Activated B cell treated with CpG ODN at 0.5 μM for 24 hours (primary cell): ENCODE measurements at regions of chr3 and their contacts with region 1.

Region 1: DNA sequence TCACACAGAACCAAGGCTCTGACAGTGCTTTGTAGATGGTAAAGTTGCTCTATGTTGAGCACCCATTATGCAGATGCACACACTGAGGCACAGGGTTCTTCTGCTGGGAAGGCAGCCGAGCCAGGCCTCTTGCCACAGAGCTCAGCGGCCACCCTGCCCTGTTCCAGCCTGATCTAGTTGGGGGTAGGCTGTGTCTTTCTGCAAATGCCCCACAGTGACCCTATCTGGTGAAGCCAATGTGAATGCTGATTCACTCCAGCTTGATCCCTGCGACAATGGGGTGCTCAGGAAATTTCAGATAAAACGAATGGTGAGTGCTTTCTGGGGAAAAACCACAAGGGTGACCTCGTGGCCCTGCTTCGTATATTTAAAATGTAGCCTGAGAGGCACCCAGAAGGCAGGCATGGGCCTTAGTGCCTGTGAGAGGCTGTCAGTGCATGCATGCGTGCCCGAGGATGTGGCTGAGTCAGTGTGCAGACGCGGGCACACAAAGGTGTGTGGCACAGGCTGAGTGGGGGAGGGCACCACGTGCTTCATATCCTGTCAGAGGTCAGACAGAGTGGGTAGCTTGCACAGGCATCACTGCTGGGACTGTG is 85.7 kb downstream of the ATP2B2 start:
- DNase-seq: no peak
- ATAC-seq: peak; percentile 94
- H3K4me3 Mint-ChIP-seq: no peak overlapping the region
- H3K27ac Mint-ChIP-seq: no peak overlapping the region
- H3K4me1 Mint-ChIP-seq: peaks cover 22% of the 10 kb centered on the region
- H3K27me3 Mint-ChIP-seq: peaks cover 11% of the 10 kb centered on the region
- CTCF ChIP-seq: no peak

Region 2: DNA sequence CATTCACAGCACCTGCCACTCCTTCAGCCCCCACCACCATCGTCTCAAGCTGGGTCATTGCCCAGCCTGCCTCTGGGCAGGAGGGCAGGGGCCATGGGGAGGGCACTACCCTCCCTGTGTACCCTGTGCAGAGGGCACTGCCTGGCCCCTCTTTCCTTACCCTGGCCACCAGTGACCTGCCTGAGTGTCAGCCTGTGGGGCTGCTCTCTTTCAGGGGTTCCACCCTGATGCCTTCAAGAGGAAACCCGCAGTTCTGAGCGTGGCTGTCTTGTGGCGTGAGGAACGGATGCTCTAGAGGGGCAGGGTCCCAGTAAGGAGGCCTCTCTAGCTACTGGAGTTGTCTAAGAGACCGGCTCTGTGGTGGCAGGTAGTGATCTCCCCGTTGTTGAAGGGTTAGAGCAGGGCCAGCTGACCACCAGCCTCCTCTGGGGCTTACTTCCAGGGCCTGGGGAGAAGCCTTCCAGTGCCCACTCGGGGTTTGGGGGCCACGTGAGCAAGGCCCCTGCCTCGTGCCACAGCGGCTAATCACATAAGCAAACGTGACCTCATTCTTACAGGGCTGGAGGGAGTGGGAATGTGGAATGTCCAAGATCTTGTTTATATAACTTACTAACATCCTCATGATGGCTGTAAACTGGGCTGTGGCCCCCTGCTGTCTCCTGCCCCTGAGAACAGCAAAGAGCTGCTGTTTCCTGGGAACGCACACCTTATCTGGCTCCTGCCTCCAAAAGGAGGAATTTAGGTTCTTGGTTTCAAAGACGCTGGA is 67.4 kb before region 1 on chr3:
- CTCF ChIA-PET with region 1: no interaction called
- POLR2A ChIA-PET with region 1: no interaction called
- intact Hi-C with region 1: no loop called
- DNase-seq: no peak
- ATAC-seq: peak; percentile 21
- H3K4me3 Mint-ChIP-seq: no peak overlapping the region
- H3K27ac Mint-ChIP-seq: no peak overlapping the region
- H3K4me1 Mint-ChIP-seq: peaks cover 45% of the 10 kb centered on the region
- H3K27me3 Mint-ChIP-seq: no peaks in the 10 kb centered on the region
- CTCF ChIP-seq: no peak

Region 3: DNA sequence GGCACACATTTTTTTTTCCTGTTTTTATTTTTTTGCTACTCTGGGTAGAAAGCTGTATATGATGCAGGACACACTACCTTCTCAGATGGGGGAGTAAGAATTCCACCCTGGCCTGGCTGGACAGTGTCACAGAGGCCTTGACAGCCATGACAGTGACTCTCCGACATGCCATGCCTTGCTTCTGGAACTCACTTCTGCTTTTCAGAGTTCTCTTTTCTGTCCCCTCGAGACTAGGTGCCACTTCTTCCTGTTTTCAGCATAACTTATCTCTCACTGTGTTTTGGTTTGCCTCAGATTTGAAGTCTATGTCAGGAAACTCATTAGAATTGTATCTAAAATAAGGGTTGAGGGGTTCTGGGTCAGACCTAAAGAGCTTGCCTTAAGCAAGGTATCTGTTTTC is 29.7 kb before region 1 on chr3:
- CTCF ChIA-PET with region 1: no interaction called
- POLR2A ChIA-PET with region 1: interaction called, 3 read pairs
- intact Hi-C with region 1: loop called (anchors 2 kb)
- DNase-seq: no peak
- ATAC-seq: peak; percentile 91
- H3K4me3 Mint-ChIP-seq: peak overlapping the region; percentile 60
- H3K27ac Mint-ChIP-seq: peak overlapping the region; percentile 92
- H3K4me1 Mint-ChIP-seq: peaks cover 94% of the 10 kb centered on the region
- H3K27me3 Mint-ChIP-seq: no peaks in the 10 kb centered on the region
- CTCF ChIP-seq: no peak